ENCODE measurements at regions of chr17 and their contacts with region 1.

Region 1: DNA sequence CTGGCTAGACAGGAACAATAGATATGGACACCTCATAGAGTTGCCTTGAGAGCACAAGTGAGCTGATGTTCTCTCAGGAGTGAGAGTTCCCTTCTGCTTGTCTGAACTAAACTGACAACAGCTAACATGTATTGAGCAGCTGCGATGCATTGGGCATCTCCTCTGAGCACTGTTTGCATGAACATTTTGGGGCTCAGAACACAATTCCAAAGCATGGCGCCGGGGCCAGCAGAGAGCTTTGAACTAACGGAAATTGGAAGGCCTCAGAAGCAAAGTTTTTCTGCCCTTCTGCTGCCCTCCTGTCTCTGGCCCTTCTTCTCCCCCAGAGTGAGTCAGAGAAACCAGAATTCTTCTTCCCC is 38.1 kb downstream of the TRPV2 start:
- DNase-seq: no peak
- H3K4me3 ChIP-seq: no peak overlapping the region; a peak in 1 of 4 replicates
- H3K27ac ChIP-seq: no peak overlapping the region
- H3K4me1 ChIP-seq: peaks cover 0 to 13% of the 10 kb centered on the region in 2 experiments; a peak in 1 of 4 replicates
- H3K27me3 ChIP-seq: no peaks in the 10 kb centered on the region
- CTCF ChIP-seq: no peak
- EP300 ChIP-seq: no peak
- RAD21 ChIP-seq: no peak

Region 2: GRCh38 chr17:16363749-16364536 is 89.5 kb before region 1 on chr17:
- CTCF ChIA-PET with region 1: interaction called, 23 read pairs
- POLR2A ChIA-PET with region 1: no interaction called
- DNase-seq: peak; percentile 74
- H3K4me3 ChIP-seq: no peak overlapping the region; a peak in 1 of 4 replicates
- H3K27ac ChIP-seq: no peak overlapping the region
- H3K4me1 ChIP-seq: peaks cover 0 to 6% of the 10 kb centered on the region in 2 experiments; a peak in 1 of 4 replicates
- H3K27me3 ChIP-seq: no peaks in the 10 kb centered on the region
- CTCF ChIP-seq: peak; percentile 97
- EP300 ChIP-seq: 0 out of 4 replicates have a peak, but pooled peaks of 1 of the 2 experiments have one; percentile 17
- RAD21 ChIP-seq: peak; percentile 75

Region 3: DNA sequence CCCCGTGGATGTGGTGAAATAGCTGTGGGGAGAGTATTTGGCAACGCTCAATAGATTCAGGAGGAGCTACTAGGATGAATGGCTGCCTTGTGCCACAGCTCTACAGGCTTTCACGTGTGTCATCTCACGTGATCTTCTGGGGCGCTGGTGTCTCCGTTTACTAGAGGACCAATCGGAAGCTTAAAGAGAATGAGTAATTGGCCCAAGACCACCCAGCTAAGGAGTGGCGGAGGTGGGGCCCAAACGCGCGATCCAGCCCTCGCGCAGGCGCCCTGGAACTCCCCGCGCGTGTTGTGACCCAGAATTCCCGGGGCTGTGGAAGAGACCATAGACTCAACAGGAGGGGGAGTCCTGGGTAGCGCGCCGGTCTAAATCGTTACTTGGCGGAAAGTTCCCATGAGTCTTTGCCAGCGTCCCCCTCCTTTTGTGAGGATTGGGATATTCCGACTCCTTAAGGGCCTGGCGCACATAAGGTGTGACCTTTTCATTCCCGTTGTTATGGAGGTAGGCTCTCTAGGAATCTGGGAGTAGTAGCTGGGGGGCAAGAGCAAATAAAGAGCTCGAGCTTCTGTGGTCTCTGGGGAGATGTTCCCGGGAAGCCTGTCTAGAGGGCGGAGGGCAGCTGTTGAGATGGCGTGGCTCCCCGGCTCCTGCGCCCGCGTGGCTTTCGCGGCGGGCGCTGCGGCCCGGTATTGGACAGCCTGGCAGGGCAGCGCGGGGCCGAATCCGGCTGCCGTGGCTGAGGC is 14.7 kb before region 1 on chr17:
- CTCF ChIA-PET with region 1: interaction called, 75 read pairs
- POLR2A ChIA-PET with region 1: interaction called, 7 read pairs
- DNase-seq: peak; percentile 99
- H3K4me3 ChIP-seq: peak overlapping the region; percentile 87 to 98
- H3K27ac ChIP-seq: peak overlapping the region; percentile 76 to 88
- H3K4me1 ChIP-seq: peaks cover 25 to 30% of the 10 kb centered on the region in 2 experiments; a peak in 3 of 4 replicates
- H3K27me3 ChIP-seq: no peaks in the 10 kb centered on the region
- CTCF ChIP-seq: no peak
- EP300 ChIP-seq: peak in 1 of 2 experiments; percentile 65; a peak in 1 of 4 replicates
- RAD21 ChIP-seq: no peak

Region 4: DNA sequence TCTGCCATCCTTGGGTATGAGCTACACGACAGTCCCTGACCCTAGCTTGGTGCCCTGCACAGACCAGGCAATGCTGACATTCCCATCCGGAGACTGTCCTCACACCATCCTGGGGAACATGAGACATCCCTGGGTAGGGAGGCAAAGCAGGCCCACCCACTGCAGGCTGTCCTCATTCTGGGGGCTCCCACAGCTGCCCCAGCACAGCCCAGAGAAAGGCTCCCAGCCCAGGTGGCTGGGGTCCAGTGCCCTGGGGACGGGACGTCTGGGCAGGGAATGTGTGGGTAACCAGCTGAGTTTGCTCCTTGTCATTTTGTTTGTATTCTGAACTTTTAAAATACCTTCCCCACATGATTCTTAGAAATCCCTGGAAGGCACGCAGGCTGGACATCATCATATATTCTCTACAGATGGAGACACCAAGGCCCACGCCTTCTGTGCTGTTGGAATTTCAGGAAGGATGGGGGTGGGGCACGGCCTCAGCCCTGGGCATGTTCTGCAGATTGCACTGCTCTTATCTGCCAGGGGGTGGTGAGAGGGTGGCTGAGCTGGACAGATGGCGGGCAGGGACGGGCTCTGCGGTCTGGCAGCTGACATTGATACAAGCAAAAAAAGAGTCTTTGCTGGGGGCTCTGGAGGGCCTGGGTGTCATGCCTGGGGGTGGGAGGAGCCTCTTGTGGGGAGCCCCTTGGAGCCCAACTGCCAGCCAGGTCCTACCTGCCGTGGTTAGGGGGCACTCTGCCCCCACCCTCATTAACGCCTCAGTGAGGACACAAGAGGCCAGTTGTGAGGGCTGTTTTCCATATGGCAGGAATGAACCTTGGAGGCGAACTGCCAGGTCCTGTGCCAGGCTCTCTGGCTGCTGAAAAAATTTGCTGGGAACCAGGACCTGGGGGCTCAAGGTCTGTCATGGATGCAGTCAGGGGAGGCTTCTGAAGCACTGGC is 10.2 kb after region 1 on chr17:
- CTCF ChIA-PET with region 1: interaction called, 68 read pairs
- POLR2A ChIA-PET with region 1: no interaction called
- DNase-seq: peak; percentile 95
- H3K4me3 ChIP-seq: no peak overlapping the region; a peak in 1 of 4 replicates
- H3K27ac ChIP-seq: peak overlapping the region in 1 of 2 experiments; percentile 88; a peak in 2 of 4 replicates
- H3K4me1 ChIP-seq: peaks cover 0 to 38% of the 10 kb centered on the region in 2 experiments; a peak in 1 of 4 replicates
- H3K27me3 ChIP-seq: no peaks in the 10 kb centered on the region
- CTCF ChIP-seq: peak; percentile 42
- EP300 ChIP-seq: peak in 1 of 2 experiments; percentile 72; a peak in 2 of 4 replicates
- RAD21 ChIP-seq: peak; percentile 54

Region 5: DNA sequence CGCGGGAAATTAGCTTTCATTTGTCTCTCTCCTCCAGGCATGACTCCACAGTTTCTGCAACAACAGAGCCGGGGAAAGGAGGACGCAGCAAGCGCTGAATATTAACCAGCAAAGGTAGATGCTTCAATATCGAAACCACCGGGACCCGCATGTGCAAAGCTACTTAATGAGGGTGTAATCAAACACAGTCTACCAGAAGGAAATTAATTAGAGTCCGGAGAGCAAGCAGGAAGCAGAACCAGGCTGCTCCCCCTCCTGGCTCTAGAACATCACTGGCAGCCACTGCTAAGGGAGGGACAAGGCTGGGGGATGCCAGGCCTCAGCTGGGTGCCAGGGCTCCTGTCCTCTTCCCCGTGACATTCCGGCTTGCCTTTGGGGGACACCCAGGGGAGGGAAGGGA is 16.8 kb after region 1 on chr17:
- CTCF ChIA-PET with region 1: interaction called, 68 read pairs
- POLR2A ChIA-PET with region 1: no interaction called
- DNase-seq: peak; percentile 62
- H3K4me3 ChIP-seq: no peak overlapping the region
- H3K27ac ChIP-seq: peak overlapping the region in 1 of 2 experiments; percentile 18; a peak in 1 of 4 replicates
- H3K4me1 ChIP-seq: peaks cover 0 to 44% of the 10 kb centered on the region in 2 experiments; a peak in 3 of 4 replicates
- H3K27me3 ChIP-seq: no peaks in the 10 kb centered on the region
- CTCF ChIP-seq: no peak
- EP300 ChIP-seq: no peak
- RAD21 ChIP-seq: no peak

Region 6: GRCh38 chr17:16486373-16487250 is 33.1 kb after region 1 on chr17:
- CTCF ChIA-PET with region 1: interaction called, 23 read pairs
- POLR2A ChIA-PET with region 1: no interaction called
- DNase-seq: peak; percentile 81
- H3K4me3 ChIP-seq: no peak overlapping the region
- H3K27ac ChIP-seq: peak overlapping the region; percentile 51 to 94; a peak in 3 of 4 replicates
- H3K4me1 ChIP-seq: peaks cover 15 to 57% of the 10 kb centered on the region in 2 experiments; a peak in 2 of 4 replicates
- H3K27me3 ChIP-seq: no peaks in the 10 kb centered on the region
- CTCF ChIP-seq: no peak
- EP300 ChIP-seq: no peak
- RAD21 ChIP-seq: no peak

Region 7: GRCh38 chr17:16491703-16492612 is 38.5 kb after region 1 on chr17 and contains the start of gene LRRC75A:
- CTCF ChIA-PET with region 1: interaction called, 23 read pairs
- POLR2A ChIA-PET with region 1: no interaction called
- DNase-seq: peak; percentile 92
- H3K4me3 ChIP-seq: peak within 1 kb of the TSS; percentile 59 to 64
- H3K27ac ChIP-seq: no peak within 1 kb of the TSS; a peak in 1 of 4 replicates
- H3K4me1 ChIP-seq: peaks cover 1 to 25% of the 10 kb centered on the region in 2 experiments; a peak in 2 of 4 replicates
- H3K27me3 ChIP-seq: peaks cover 20% of the 10 kb centered on the region; the same call in 1 of the 2 replicates
- CTCF ChIP-seq: no peak; the same call in 1 of the 2 replicates
- EP300 ChIP-seq: no peak
- RAD21 ChIP-seq: no peak
- polyA plus RNA-seq, gene LRRC75A: 1.2 and 1.3 TPM in 2 replicates

Measured in SK-N-SH (cell line).